K562 (cell line): ENCODE measurements at regions of chr17 and their contacts with region 1.

Region 1: DNA sequence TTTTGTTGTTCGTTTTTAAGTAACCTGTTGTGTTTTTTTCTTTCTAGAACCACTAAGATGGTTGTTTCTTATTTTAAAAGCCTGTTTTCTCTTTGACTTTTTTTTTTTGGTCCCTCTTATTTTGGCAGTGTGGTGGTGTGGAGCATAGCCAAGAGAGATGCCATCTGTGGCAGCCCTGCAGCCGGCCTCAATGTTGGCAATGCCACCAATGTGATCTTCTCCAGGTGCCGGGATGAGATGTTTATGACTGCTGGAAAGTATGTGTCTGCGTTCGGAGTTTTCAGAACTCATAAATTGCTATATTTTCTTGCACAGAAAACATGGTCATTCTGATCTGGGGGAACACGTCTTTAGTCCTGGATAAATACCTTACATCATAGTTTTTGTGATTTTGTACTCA is 17.6 kb downstream of the CFAP52 start:
- DNase-seq: no peak
- ATAC-seq: no peak
- H3K4me3 ChIP-seq: no peak overlapping the region
- H3K27ac ChIP-seq: no peak overlapping the region
- H3K4me1 ChIP-seq: no peaks in the 10 kb centered on the region
- H3K27me3 ChIP-seq: no peaks in the 10 kb centered on the region
- CTCF ChIP-seq: no peak
- EP300 ChIP-seq: no peak
- POLR2A ChIP-seq: no peak
- RAD21 ChIP-seq: no peak

Region 2: GRCh38 chr17:9549215-9549614 is 44.9 kb before region 1 on chr17:
- CTCF ChIA-PET with region 1: no interaction called
- POLR2A ChIA-PET with region 1: no interaction called
- in situ Hi-C with region 1: no loop called
- intact Hi-C with region 1: no loop called
- DNase-seq: no peak
- ATAC-seq: no peak
- H3K4me3 ChIP-seq: no peak overlapping the region
- H3K27ac ChIP-seq: no peak overlapping the region
- H3K4me1 ChIP-seq: no peaks in the 10 kb centered on the region
- H3K27me3 ChIP-seq: no peaks in the 10 kb centered on the region
- CTCF ChIP-seq: no peak
- EP300 ChIP-seq: no peak
- POLR2A ChIP-seq: no peak
- RAD21 ChIP-seq: no peak

Region 3: DNA sequence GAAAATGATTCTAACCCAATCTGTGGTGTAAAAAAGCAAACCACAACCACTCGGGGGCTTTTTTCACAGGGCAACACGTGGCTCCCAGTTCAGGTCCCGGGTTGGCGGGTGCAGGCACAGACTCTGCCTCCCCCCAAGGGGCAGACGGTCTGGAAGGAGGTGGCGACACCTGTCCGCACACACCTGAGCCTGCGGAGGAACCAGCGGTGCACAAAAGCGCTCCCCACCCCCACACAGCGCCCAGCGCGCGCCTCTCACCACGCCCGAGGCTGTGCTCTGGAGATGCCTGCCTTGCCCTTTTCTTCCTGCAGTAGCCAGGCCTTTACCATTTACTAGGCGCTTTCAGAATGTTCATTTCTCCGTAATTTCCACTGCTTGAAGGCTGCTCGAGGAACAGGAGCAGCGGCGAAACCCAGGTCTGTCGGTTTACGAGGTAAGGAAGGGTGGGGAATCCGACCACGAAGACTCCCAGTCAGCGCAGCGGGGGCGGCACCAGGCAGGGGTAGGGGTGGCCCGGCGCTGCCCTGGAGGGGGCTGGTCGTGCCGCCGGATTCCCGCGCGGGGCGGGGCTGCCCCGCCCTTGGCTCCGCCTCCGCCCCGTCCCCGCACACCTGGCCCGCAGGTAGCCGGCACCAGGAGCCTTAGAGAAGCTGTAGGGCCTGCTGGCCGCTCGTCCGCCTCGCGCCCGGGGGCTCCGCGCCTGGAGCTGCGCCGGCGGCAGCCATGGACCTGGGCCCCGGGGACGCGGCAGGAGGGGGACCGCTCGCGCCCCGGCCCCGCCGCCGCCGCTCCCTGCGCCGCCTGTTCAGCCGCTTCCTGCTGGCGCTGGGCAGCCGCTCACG is 51.1 kb after region 1 on chr17 and contains the start of gene USP43:
- CTCF ChIA-PET with region 1: no interaction called
- POLR2A ChIA-PET with region 1: no interaction called
- in situ Hi-C with region 1: loop called (anchors 5 kb)
- intact Hi-C with region 1: no loop called
- DNase-seq: peak; percentile 3 to 62 (median 41)
- ATAC-seq: peak; percentile 70
- H3K4me3 ChIP-seq: peak within 1 kb of the TSS; percentile 39
- H3K27ac ChIP-seq: no peak within 1 kb of the TSS
- H3K4me1 ChIP-seq: peaks cover 0 to 17% of the 10 kb centered on the region in 2 experiments; a peak in 2 of 5 replicates
- H3K27me3 ChIP-seq: peaks cover 5 to 17% of the 10 kb centered on the region in 2 experiments; a peak in 4 of 5 replicates
- CTCF ChIP-seq: 0 out of 6 replicates have a peak, but pooled peaks of 1 of the 3 experiments have one; percentile 0
- EP300 ChIP-seq: no peak
- POLR2A ChIP-seq: no peak
- RAD21 ChIP-seq: no peak
- polyA plus RNA-seq, gene USP43: 0.01 TPM in 1 of 2 experiments, not detected in the other